CD8-positive, alpha-beta T cell (primary cell): ENCODE measurements at regions of chr19 and their contacts with region 1.

Region 1: GRCh38 chr19:48513289-48514122 is 1.9 kb upstream of the LMTK3 start:
- DNase-seq: peak in 8 of 9 experiments; percentile 61 to 88 (median 78)
- ATAC-seq: peak; percentile 58
- H3K4me3 ChIP-seq: peak overlapping the region; percentile 78 to 88
- H3K4me3 Mint-ChIP-seq: no peak overlapping the region
- H3K27ac ChIP-seq: peak overlapping the region; percentile 68 to 71
- H3K27ac Mint-ChIP-seq: peak overlapping the region; percentile 93
- H3K4me1 ChIP-seq: peaks cover 23% of the 10 kb centered on the region
- H3K4me1 Mint-ChIP-seq: peaks cover 18% of the 10 kb centered on the region
- H3K27me3 ChIP-seq: no peaks in the 10 kb centered on the region
- H3K27me3 Mint-ChIP-seq: no peaks in the 10 kb centered on the region
- CTCF ChIP-seq: no peak

Region 2: GRCh38 chr19:48321622-48322591 is 191.6 kb before region 1 on chr19:
- CTCF ChIA-PET with region 1: no interaction called
- POLR2A ChIA-PET with region 1: no interaction called
- intact Hi-C with region 1: loop called in 1 of 2 experiments (anchors 5 kb)
- DNase-seq: peak; percentile 99 to 100 (median 100)
- ATAC-seq: peak; percentile 68
- H3K4me3 ChIP-seq: peak overlapping the region; percentile 76 to 78
- H3K4me3 Mint-ChIP-seq: peak overlapping the region; percentile 94
- H3K27ac ChIP-seq: peak overlapping the region; percentile 87 to 99
- H3K27ac Mint-ChIP-seq: peak overlapping the region; percentile 100
- H3K4me1 ChIP-seq: peaks cover 54% of the 10 kb centered on the region
- H3K4me1 Mint-ChIP-seq: peaks cover 60% of the 10 kb centered on the region
- H3K27me3 ChIP-seq: no peaks in the 10 kb centered on the region
- H3K27me3 Mint-ChIP-seq: no peaks in the 10 kb centered on the region
- CTCF ChIP-seq: no peak

Region 3: GRCh38 chr19:48398375-48399235 is 114.9 kb before region 1 on chr19:
- CTCF ChIA-PET with region 1: no interaction called
- POLR2A ChIA-PET with region 1: no interaction called
- intact Hi-C with region 1: loop called in 1 of 2 experiments (anchors 2 kb)
- DNase-seq: peak; percentile 73 to 94 (median 86)
- ATAC-seq: peak; percentile 77
- H3K4me3 ChIP-seq: peak overlapping the region; percentile 45 to 47
- H3K4me3 Mint-ChIP-seq: peak overlapping the region; percentile 63
- H3K27ac ChIP-seq: peak overlapping the region in 1 of 2 experiments; percentile 35
- H3K27ac Mint-ChIP-seq: no peak overlapping the region
- H3K4me1 ChIP-seq: peaks cover 42% of the 10 kb centered on the region
- H3K4me1 Mint-ChIP-seq: peaks cover 36% of the 10 kb centered on the region
- H3K27me3 ChIP-seq: peaks cover 20 to 32% of the 10 kb centered on the region in 2 experiments
- H3K27me3 Mint-ChIP-seq: peaks cover 22% of the 10 kb centered on the region
- CTCF ChIP-seq: no peak

Region 4: GRCh38 chr19:48413879-48414587 is 99.5 kb before region 1 on chr19:
- CTCF ChIA-PET with region 1: no interaction called
- POLR2A ChIA-PET with region 1: no interaction called
- intact Hi-C with region 1: no loop called
- DNase-seq: peak in 2 of 9 experiments; percentile 20 to 24
- ATAC-seq: no peak
- H3K4me3 ChIP-seq: peak overlapping the region; percentile 35 to 49
- H3K4me3 Mint-ChIP-seq: peak overlapping the region; percentile 77
- H3K27ac ChIP-seq: no peak overlapping the region
- H3K27ac Mint-ChIP-seq: no peak overlapping the region
- H3K4me1 ChIP-seq: peaks cover 12% of the 10 kb centered on the region
- H3K4me1 Mint-ChIP-seq: peaks cover 21% of the 10 kb centered on the region
- H3K27me3 ChIP-seq: peaks cover 0 to 2% of the 10 kb centered on the region in 2 experiments
- H3K27me3 Mint-ChIP-seq: peaks cover 16% of the 10 kb centered on the region
- CTCF ChIP-seq: no peak

Region 5: GRCh38 chr19:48468775-48469288 is 44.7 kb before region 1 on chr19:
- CTCF ChIA-PET with region 1: no interaction called
- POLR2A ChIA-PET with region 1: interaction called, 3 read pairs
- intact Hi-C with region 1: loop called in 1 of 2 experiments (anchors 1 kb)
- DNase-seq: peak; percentile 98 to 100 (median 99)
- ATAC-seq: peak; percentile 85
- H3K4me3 ChIP-seq: peak overlapping the region; percentile 83 to 95
- H3K4me3 Mint-ChIP-seq: peak overlapping the region; percentile 90
- H3K27ac ChIP-seq: peak overlapping the region; percentile 75 to 90
- H3K27ac Mint-ChIP-seq: peak overlapping the region; percentile 85
- H3K4me1 ChIP-seq: peaks cover 15% of the 10 kb centered on the region
- H3K4me1 Mint-ChIP-seq: peaks cover 21% of the 10 kb centered on the region
- H3K27me3 ChIP-seq: no peaks in the 10 kb centered on the region
- H3K27me3 Mint-ChIP-seq: no peaks in the 10 kb centered on the region
- CTCF ChIP-seq: no peak

Region 6: GRCh38 chr19:48588670-48589399 is 75.3 kb after region 1 on chr19:
- CTCF ChIA-PET with region 1: interaction called, 86 read pairs
- POLR2A ChIA-PET with region 1: no interaction called
- intact Hi-C with region 1: no loop called
- DNase-seq: peak; percentile 75 to 92 (median 87)
- ATAC-seq: peak; percentile 89
- H3K4me3 ChIP-seq: peak overlapping the region; percentile 40 to 56
- H3K4me3 Mint-ChIP-seq: peak overlapping the region; percentile 83
- H3K27ac ChIP-seq: peak overlapping the region in 1 of 2 experiments; percentile 54
- H3K27ac Mint-ChIP-seq: peak overlapping the region; percentile 70
- H3K4me1 ChIP-seq: peaks cover 7% of the 10 kb centered on the region
- H3K4me1 Mint-ChIP-seq: peaks cover 22% of the 10 kb centered on the region
- H3K27me3 ChIP-seq: peaks cover 0 to 3% of the 10 kb centered on the region in 2 experiments
- H3K27me3 Mint-ChIP-seq: peaks cover 4% of the 10 kb centered on the region
- CTCF ChIP-seq: peak; percentile 92

Region 7: GRCh38 chr19:48600679-48601417 is 87.3 kb after region 1 on chr19:
- CTCF ChIA-PET with region 1: no interaction called
- POLR2A ChIA-PET with region 1: no interaction called
- intact Hi-C with region 1: no loop called
- DNase-seq: no peak
- ATAC-seq: no peak
- H3K4me3 ChIP-seq: no peak overlapping the region
- H3K4me3 Mint-ChIP-seq: no peak overlapping the region
- H3K27ac ChIP-seq: no peak overlapping the region
- H3K27ac Mint-ChIP-seq: no peak overlapping the region
- H3K4me1 ChIP-seq: peaks cover 7% of the 10 kb centered on the region
- H3K4me1 Mint-ChIP-seq: peaks cover 5% of the 10 kb centered on the region
- H3K27me3 ChIP-seq: no peaks in the 10 kb centered on the region
- H3K27me3 Mint-ChIP-seq: no peaks in the 10 kb centered on the region
- CTCF ChIP-seq: no peak

Region 8: DNA sequence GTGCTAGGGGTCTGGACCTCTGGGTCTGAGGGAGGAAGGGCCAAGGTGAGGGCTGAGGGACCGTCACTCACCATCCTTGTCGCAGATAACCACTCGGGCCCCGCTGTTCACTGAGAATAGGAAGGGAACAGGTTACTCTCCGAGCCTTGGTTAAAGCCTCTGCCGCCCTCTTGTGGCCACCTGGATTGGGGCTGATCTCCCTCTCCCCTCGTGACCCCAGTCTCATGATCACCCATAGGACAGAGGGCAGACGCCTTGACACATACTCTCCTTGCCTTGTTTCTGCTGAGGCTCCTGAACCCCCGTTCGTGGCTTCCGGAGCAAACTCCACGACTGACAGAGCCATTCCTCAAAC is 322.2 kb after region 1 on chr19:
- CTCF ChIA-PET with region 1: no interaction called
- POLR2A ChIA-PET with region 1: no interaction called
- intact Hi-C with region 1: loop called in 1 of 2 experiments (anchors 5 kb)
- DNase-seq: peak; percentile 87 to 96 (median 92)
- ATAC-seq: peak; percentile 86
- H3K4me3 ChIP-seq: peak overlapping the region; percentile 42 to 51
- H3K4me3 Mint-ChIP-seq: peak overlapping the region; percentile 83
- H3K27ac ChIP-seq: no peak overlapping the region
- H3K27ac Mint-ChIP-seq: peak overlapping the region; percentile 50
- H3K4me1 ChIP-seq: peaks cover 22% of the 10 kb centered on the region
- H3K4me1 Mint-ChIP-seq: peaks cover 20% of the 10 kb centered on the region
- H3K27me3 ChIP-seq: peaks cover 0 to 5% of the 10 kb centered on the region in 2 experiments
- H3K27me3 Mint-ChIP-seq: peaks cover 5% of the 10 kb centered on the region
- CTCF ChIP-seq: peak; percentile 66